Naive thymus-derived CD8-positive, alpha-beta T cell (primary cell): ENCODE measurements at regions of chr17 and their contacts with region 1.

Region 1: DNA sequence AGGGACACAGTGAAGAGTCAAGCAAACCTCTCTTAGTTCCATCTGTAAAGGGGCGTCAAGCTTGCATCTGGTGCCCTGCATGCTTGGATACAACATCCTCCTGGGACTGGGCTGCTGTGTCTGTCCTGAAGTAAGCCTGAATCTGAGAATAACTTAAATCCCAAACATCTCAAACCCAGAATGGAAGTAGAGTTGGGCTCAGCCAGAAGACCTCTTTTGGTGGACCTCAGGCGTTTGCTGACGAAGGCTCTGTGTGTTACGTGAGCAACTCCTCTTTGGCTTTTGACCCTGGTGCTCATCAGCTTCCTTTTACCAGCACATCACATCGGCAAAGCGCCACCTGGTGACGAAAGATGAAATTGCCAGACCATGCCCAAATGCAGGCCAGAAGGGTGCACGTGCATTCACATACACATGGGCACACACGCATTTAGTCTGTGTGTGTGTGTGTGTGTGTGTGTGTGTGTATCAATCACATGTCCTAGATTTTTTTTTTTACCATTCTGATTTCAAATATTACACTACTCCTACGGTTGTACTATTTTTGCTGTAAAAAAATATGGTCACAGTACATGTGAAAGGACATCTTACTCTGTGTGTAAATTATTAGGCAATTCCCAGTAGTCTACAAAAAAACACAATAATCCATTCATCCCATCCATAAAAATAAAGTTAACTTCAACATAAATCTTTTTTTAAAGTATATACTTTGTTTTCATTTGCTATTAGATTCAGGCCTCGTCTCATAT is 41.1 kb upstream of the FOXJ1 start:
- DNase-seq: peak; percentile 77 to 96 (median 91)
- ATAC-seq: peak; percentile 70 to 73
- H3K4me3 Mint-ChIP-seq: peak overlapping the region in 9 of 10 donors; percentile 6 to 75 (median 55)
- H3K27ac Mint-ChIP-seq: peak overlapping the region; percentile 31 to 98 (median 95)
- H3K4me1 Mint-ChIP-seq: peaks cover 23 to 69% (median 60%) of the 10 kb centered on the region in 4 donors
- H3K27me3 Mint-ChIP-seq: no peaks in the 10 kb centered on the region

Region 2: DNA sequence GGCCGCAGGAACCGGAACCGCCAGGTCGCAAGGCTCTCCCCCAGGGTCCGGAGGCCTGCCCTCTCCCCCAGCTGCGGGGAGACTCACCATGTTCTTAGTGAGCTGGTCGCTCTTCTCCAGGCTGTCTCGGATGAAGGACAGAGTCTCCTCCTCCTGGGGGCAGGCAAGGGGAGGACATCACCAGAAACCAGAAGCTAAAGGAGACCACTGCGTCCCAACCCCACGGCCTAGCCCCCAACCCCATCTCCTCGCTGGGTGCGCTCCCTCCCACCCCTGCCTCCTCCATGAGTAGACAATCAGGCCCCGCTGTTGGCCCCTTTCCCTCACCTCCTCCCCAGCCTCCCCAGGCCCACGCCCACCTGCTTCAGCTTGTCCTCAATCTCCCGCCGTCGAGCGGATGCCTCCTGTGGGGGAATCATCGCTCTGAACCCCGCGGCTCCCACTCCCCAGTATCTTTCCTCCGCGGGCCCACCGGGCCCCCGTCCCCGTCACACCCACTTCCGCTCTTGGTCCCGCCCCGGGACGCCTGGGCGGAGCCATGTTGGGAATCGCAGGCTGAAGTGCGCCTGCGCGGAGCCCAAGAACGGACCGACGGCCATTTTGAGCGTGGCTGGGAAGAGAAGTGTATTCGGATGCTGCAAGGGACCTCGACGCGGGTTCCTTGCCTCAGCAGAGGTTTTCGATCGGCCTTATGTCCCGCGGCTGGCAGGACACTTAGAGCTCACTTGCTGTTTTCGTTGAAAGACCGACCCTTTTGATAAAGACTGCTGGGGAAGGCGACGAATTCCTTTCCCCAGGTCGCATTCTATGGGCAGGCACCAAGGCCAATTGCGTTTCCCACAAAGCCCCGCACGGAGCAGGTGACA is 78.7 kb before region 1 on chr17 and contains the start of gene EXOC7:
- POLR2A ChIA-PET with region 1: no interaction called
- DNase-seq: peak; percentile 87 to 95 (median 92)
- ATAC-seq: peak; percentile 90 to 92
- H3K4me3 Mint-ChIP-seq: peak within 1 kb of the TSS; percentile 94 to 99 (median 97)
- H3K27ac Mint-ChIP-seq: peak within 1 kb of the TSS; percentile 95 to 99 (median 98)
- H3K4me1 Mint-ChIP-seq: peaks cover 6 to 39% (median 36%) of the 10 kb centered on the region in 4 donors
- H3K27me3 Mint-ChIP-seq: no peaks in the 10 kb centered on the region
- polyA plus RNA-seq, gene EXOC7: 46.0 to 62.6 (median 49.0) TPM

Region 3: GRCh38 chr17:76121932-76122430 is 60.2 kb before region 1 on chr17:
- POLR2A ChIA-PET with region 1: interaction called, 113 read pairs
- DNase-seq: no peak
- ATAC-seq: peak; percentile 13 to 37
- H3K4me3 Mint-ChIP-seq: peak overlapping the region; percentile 28 to 78 (median 63)
- H3K27ac Mint-ChIP-seq: peak overlapping the region in 8 of 10 donors; percentile 46 to 90 (median 80)
- H3K4me1 Mint-ChIP-seq: peaks cover 18 to 40% (median 31%) of the 10 kb centered on the region in 4 donors
- H3K27me3 Mint-ChIP-seq: no peaks in the 10 kb centered on the region

Region 4: DNA sequence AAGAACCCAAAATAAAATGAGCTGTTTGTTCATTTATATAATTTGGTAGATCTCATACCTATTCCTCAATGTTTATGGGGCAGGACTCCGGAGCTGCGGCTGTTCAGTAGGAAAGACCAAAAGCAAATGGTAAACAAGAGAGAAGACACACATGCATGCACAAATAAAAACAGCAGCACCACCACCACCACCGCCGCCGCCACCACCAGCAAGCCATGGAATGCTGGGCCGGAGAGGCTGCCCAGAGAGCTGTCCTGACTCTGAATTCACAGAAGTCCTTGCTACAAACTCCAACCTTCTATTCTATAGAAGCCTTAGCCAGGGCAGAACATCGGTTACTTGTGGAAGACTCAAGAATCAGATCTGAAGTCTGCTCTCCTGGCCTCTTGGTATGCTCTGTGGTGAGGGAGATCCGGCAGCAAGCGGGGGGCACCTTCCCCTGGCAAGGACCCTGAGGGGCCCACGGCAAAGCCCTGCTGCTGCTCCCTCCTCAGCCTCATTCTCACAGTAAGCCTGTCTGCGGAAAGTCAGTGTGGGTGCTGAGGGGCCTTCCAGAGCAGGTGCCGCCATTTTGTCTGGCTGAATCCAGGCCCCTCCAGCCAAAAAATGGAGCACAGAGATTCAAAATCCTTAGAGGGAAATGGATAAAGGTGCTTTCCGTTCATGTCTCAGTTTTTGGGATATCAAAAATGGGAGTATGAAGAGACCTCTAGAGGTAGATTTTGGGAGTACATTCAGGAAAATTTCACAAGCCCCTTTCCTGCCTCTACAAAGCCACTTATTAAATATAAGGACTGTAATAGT is 34.8 kb before region 1 on chr17:
- POLR2A ChIA-PET with region 1: interaction called, 168 read pairs
- DNase-seq: no peak
- ATAC-seq: no peak
- H3K4me3 Mint-ChIP-seq: no peak overlapping the region
- H3K27ac Mint-ChIP-seq: peak overlapping the region; percentile 96 to 100 (median 98)
- H3K4me1 Mint-ChIP-seq: peaks cover 33 to 87% (median 75%) of the 10 kb centered on the region in 4 donors
- H3K27me3 Mint-ChIP-seq: no peaks in the 10 kb centered on the region

Region 5: DNA sequence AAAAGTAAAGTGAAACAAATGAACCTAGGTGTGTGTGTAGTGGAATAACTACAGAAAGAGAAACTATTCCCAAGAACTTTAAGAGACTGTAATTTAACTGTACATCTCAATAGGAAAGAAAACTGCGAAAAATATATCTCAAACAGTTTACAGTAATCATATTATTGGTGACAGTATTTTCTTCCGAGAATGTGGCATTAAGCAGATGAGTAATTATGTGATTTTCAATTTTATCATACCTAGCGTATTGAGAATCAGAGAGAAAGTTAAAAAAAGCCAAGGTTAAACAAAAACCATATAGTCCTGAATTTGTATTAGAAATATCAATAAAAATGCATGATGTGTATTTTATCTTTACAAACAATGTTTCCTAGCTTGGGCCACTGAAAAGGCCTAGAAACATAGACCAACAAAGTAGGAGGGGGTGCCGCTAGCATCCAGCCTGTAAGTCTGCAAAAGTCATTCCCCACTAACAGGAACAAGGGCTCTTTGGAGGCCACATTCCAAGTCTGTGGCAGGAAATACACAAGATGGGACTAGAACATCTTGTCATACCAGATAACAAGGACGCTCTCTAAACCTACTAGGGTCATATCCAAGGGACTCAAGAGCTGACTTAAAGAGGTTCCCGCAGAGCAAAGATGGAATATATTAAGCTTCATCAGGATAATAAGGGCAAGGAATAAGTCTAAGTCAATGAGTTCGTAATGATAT is 37.6 kb after region 1 on chr17:
- POLR2A ChIA-PET with region 1: no interaction called
- DNase-seq: no peak
- ATAC-seq: no peak
- H3K4me3 Mint-ChIP-seq: no peak overlapping the region
- H3K27ac Mint-ChIP-seq: peak overlapping the region in 5 of 10 donors; percentile 11 to 65 (median 43)
- H3K4me1 Mint-ChIP-seq: peaks cover 15 to 45% (median 37%) of the 10 kb centered on the region in 4 donors
- H3K27me3 Mint-ChIP-seq: no peaks in the 10 kb centered on the region

Region 6: DNA sequence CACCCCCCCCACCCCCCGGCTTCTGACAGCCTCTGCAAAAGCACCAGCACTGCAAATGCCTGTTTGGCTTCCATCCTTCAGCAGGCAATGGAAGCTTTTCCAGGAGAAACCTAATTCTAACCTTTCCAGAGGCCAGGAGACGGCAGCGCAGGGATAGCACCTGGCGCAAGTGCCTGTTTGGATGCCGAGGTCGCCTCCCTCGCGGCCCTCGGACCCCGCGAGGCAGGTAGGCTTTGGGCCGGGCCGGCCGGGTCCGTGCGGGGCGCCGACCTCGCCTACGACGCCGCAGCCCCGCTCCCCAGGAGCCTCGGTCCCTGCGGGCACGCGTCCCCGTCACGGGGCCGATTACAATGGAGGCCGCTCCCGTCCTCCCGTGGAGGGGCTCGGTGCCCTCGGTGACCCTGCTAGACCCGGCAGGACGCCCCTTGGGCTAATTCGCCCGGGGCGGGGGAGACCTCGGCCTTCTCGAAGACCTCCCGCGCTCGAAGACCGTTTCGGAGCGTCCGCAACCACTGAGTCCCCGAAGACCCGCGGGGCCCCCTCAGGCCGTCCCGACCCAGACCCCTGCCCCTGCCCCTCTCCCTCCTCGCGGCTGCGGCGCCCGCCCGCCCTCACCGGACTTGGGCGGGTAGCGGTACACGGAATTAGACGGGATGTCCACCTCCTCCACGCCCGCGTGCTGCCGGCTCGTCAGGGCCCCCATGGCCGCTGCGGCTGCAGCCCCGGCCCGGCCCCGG is 57.5 kb after region 1 on chr17:
- POLR2A ChIA-PET with region 1: interaction called, 10 read pairs
- DNase-seq: peak in 3 of 10 donors; percentile 10 to 25 (median 20)
- ATAC-seq: peak; percentile 16 to 17
- H3K4me3 Mint-ChIP-seq: peak overlapping the region; percentile 80 to 94 (median 87)
- H3K27ac Mint-ChIP-seq: peak overlapping the region; percentile 63 to 95 (median 92)
- H3K4me1 Mint-ChIP-seq: peaks cover 27 to 60% (median 55%) of the 10 kb centered on the region in 4 donors
- H3K27me3 Mint-ChIP-seq: peaks cover 0 to 9% (median 0%) of the 10 kb centered on the region in 5 donors

Region 7: GRCh38 chr17:76252040-76252954 is 70.1 kb after region 1 on chr17:
- POLR2A ChIA-PET with region 1: interaction called, 17 read pairs
- DNase-seq: peak in 4 of 10 donors; percentile 26 to 56 (median 48)
- ATAC-seq: peak; percentile 48 to 71
- H3K4me3 Mint-ChIP-seq: peak overlapping the region; percentile 63 to 86 (median 77)
- H3K27ac Mint-ChIP-seq: peak overlapping the region; percentile 90 to 98 (median 92)
- H3K4me1 Mint-ChIP-seq: peaks cover 33 to 69% (median 66%) of the 10 kb centered on the region in 4 donors
- H3K27me3 Mint-ChIP-seq: no peaks in the 10 kb centered on the region

Region 8: GRCh38 chr17:76278952-76279741 is 97.0 kb after region 1 on chr17:
- POLR2A ChIA-PET with region 1: interaction called, 527 read pairs
- DNase-seq: peak; percentile 70 to 93 (median 83)
- ATAC-seq: peak; percentile 92
- H3K4me3 Mint-ChIP-seq: peak overlapping the region in 1 of 10 donors; percentile 20
- H3K27ac Mint-ChIP-seq: peak overlapping the region in 8 of 10 donors; percentile 20 to 86 (median 46)
- H3K4me1 Mint-ChIP-seq: peaks cover 16 to 38% (median 32%) of the 10 kb centered on the region in 4 donors
- H3K27me3 Mint-ChIP-seq: no peaks in the 10 kb centered on the region